HepG2 (cell line): ENCODE measurements at regions of chr2 and their contacts with region 1.

Region 1: GRCh38 chr2:53826587-53827397 is 33.0 kb downstream of the GPR75 start:
- DNase-seq: peak; percentile 100
- ATAC-seq: peak; percentile 95
- H3K4me3 ChIP-seq: peak overlapping the region in 2 of 3 experiments; percentile 20 to 44; a peak in 3 of 6 replicates
- H3K27ac ChIP-seq: peak overlapping the region; percentile 93
- H3K4me1 ChIP-seq: peaks cover 53% of the 10 kb centered on the region
- H3K27me3 ChIP-seq: no peaks in the 10 kb centered on the region
- CTCF ChIP-seq: no peak
- EP300 ChIP-seq: peak; percentile 97 to 99
- POLR2A ChIP-seq: peak; percentile 23 to 52; a peak in 3 of 4 replicates
- RAD21 ChIP-seq: no peak; the same call in 1 of the 2 replicates

Region 2: DNA sequence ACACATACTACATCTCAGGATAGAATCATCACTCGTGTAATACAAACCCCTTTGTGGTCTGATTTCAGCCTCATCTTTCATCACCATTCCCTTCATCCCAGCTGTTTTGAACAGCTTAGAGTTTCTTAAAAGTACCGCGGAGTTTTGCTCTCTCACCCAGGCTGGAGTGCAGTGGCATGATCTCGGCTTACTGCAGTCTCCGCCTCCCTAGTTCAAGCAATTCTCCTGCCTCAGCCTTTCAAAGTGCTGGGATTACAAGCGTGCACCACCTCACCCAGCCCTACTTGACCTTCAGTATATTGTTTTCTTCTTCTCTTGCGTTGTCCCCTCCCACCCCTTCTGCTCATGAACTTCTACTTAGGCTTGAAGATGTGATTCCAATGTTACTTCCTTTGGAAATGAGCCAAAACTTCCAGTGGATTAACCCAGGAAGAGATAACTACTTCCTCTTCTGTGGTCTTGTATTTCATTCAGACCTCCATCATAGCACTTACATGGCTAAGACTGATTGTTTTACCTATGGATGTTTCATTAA is 24.1 kb before region 1 on chr2:
- CTCF ChIA-PET with region 1: no interaction called
- POLR2A ChIA-PET with region 1: no interaction called
- in situ Hi-C with region 1: no loop called
- intact Hi-C with region 1: no loop called
- DNase-seq: no peak
- ATAC-seq: no peak
- H3K4me3 ChIP-seq: no peak overlapping the region
- H3K27ac ChIP-seq: no peak overlapping the region
- H3K4me1 ChIP-seq: no peaks in the 10 kb centered on the region
- H3K27me3 ChIP-seq: no peaks in the 10 kb centered on the region
- CTCF ChIP-seq: no peak
- EP300 ChIP-seq: no peak
- POLR2A ChIP-seq: no peak
- RAD21 ChIP-seq: no peak

Region 3: GRCh38 chr2:53854678-53855077 is 27.9 kb after region 1 on chr2:
- CTCF ChIA-PET with region 1: no interaction called
- POLR2A ChIA-PET with region 1: no interaction called
- in situ Hi-C with region 1: no loop called
- intact Hi-C with region 1: loop called (anchors 1 kb)
- DNase-seq: no peak
- ATAC-seq: no peak
- H3K4me3 ChIP-seq: no peak overlapping the region
- H3K27ac ChIP-seq: no peak overlapping the region
- H3K4me1 ChIP-seq: peaks cover 29% of the 10 kb centered on the region
- H3K27me3 ChIP-seq: no peaks in the 10 kb centered on the region
- CTCF ChIP-seq: no peak
- EP300 ChIP-seq: no peak
- POLR2A ChIP-seq: no peak
- RAD21 ChIP-seq: no peak